Activated CD4-positive, alpha-beta memory T cell treated with anti-CD3 and anti-CD28 coated beads for 36 hours (primary cell): ENCODE measurements at regions of chr7 and their contacts with region 1.

Region 1: GRCh38 chr7:30983042-30983913 is 19.5 kb downstream of the GHRHR start:
- DNase-seq: peak; percentile 84
- H3K4me3 Mint-ChIP-seq: no peak overlapping the region
- H3K27ac Mint-ChIP-seq: no peak overlapping the region
- H3K4me1 Mint-ChIP-seq: peaks cover 12% of the 10 kb centered on the region
- H3K27me3 Mint-ChIP-seq: peaks cover 15% of the 10 kb centered on the region

Region 2: DNA sequence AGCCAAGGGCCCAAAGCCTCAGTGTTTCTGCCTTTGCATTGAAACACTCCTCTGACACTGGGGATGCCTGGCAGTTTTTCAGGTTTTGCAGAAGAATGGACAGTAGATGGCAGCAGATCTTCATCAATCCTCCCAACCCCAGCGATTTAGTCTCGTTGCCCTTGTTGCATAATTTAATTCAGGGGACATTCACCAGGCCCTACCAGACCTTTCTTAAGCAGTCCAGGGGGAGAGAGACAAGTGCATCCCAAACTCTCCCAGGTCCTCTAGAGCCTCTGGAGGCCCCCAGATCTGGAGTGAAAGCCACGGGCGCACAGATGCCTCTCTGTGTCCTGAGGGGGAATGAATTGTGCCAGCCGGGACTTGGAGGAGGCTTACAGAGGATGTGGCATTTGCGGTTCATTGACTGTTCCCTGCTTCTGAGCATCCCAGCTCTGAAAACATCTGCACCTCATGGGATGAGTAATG is 182.5 kb before region 1 on chr7:
- CTCF ChIA-PET with region 1: interaction called, 10 read pairs
- POLR2A ChIA-PET with region 1: no interaction called
- intact Hi-C with region 1: no loop called
- DNase-seq: peak; percentile 25
- H3K4me3 Mint-ChIP-seq: no peak overlapping the region
- H3K27ac Mint-ChIP-seq: no peak overlapping the region
- H3K4me1 Mint-ChIP-seq: peaks cover 8% of the 10 kb centered on the region
- H3K27me3 Mint-ChIP-seq: no peaks in the 10 kb centered on the region

Region 3: DNA sequence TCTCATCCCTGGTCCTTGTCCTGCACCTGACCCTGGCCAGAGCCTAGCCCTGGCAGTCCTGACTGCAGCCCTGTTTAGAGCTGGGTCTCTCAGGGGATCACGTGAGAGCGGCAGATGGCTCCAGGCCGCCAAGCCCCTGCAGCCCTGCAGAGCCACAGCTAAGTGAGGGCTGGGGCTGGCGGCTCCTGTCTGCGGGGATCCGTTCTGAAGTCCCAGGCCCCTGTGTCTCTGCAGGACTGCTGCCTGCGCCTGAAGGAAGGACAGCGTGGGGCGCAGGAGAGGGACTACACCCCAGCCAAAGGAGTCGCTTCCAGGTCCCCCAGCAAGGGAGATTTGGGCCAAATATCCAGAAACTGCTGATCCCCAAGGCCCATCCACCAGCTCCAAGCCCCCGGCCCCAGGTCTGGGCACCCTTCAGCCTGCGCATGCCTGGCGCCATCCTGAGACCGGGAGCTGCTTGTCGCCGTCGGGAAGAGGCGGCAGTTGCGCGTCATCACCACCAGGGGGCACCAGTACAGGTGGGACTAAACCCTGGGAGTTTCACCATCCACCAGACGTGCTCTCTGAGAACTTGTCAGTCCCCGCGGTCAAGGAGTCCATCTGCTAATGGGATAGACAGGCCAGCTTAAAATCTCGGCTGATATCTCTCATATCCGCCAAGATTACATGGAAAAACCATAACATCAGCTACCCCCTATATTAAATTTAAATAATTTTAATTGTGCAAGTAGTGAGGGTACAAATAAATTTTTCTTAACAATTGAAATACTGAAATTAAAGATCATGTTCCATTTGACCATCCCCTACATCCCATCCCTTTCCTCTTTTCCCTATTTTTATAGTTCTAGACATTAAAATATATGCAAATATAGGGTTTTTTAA is 44.6 kb before region 1 on chr7:
- CTCF ChIA-PET with region 1: interaction called, 13 read pairs
- POLR2A ChIA-PET with region 1: no interaction called
- intact Hi-C with region 1: no loop called
- DNase-seq: peak; percentile 77
- H3K4me3 Mint-ChIP-seq: no peak overlapping the region
- H3K27ac Mint-ChIP-seq: no peak overlapping the region
- H3K4me1 Mint-ChIP-seq: no peaks in the 10 kb centered on the region
- H3K27me3 Mint-ChIP-seq: peaks cover 15% of the 10 kb centered on the region

Region 4: DNA sequence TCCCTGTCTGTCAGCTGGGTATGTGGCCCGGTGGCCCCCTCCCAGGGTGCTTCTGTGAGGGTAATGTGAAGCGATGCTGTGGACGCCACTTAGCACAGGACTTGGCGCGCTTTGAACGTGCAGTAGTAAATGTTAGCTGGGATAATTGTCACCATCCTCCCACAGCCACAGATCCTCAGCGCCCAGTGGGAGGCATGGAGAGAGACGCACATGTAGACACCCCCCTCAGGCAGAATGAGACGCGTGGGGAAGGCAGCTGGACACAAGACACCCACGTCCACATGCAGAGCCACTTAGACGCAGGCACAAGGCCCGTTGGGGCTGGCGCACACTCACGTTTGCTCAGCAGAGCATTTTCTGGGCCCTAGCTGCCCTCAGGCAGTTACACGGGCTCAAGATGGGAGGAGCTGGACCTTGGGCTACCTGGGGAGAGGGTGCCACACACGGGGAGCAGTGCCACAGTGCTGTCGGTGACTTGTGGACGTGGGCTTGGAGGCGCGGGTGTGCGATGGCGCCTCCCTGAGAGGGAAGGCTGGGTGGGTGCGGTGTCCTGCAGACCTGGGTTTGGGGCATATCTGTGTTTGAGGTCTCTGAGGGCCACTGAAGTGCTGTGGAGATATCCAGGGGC is 95.2 kb after region 1 on chr7:
- CTCF ChIA-PET with region 1: no interaction called
- POLR2A ChIA-PET with region 1: no interaction called
- intact Hi-C with region 1: no loop called
- DNase-seq: no peak
- H3K4me3 Mint-ChIP-seq: no peak overlapping the region
- H3K27ac Mint-ChIP-seq: no peak overlapping the region
- H3K4me1 Mint-ChIP-seq: peaks cover 2% of the 10 kb centered on the region
- H3K27me3 Mint-ChIP-seq: peaks cover 2% of the 10 kb centered on the region

Region 5: GRCh38 chr7:31122649-31123058 is 139.4 kb after region 1 on chr7:
- CTCF ChIA-PET with region 1: interaction called, 297 read pairs
- POLR2A ChIA-PET with region 1: interaction called, 3 read pairs
- intact Hi-C with region 1: loop called (anchors 1 kb)
- DNase-seq: peak; percentile 57
- H3K4me3 Mint-ChIP-seq: no peak overlapping the region
- H3K27ac Mint-ChIP-seq: no peak overlapping the region
- H3K4me1 Mint-ChIP-seq: no peaks in the 10 kb centered on the region
- H3K27me3 Mint-ChIP-seq: peaks cover 9% of the 10 kb centered on the region

Region 6: DNA sequence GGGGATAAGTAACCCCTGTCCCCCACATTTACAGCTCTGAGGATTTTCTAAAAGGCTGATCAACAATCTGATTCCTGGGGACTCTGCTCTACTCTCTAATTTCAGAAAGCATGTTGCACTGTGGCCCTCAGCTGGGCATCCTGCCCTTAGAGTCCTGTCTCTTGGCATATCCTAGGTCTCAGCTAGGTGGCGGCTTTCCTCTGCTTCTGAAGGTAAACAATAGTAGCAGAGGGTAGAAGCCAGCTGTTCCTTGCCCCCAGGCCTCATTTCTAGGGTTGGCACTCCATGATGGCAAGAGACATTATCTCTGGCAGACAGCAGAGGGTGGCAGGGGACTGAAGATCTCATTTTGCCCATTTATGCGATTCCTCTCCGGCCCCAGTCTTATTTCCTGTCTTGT is 145.8 kb after region 1 on chr7:
- CTCF ChIA-PET with region 1: interaction called, 297 read pairs
- POLR2A ChIA-PET with region 1: no interaction called
- intact Hi-C with region 1: no loop called
- DNase-seq: no peak
- H3K4me3 Mint-ChIP-seq: no peak overlapping the region
- H3K27ac Mint-ChIP-seq: no peak overlapping the region
- H3K4me1 Mint-ChIP-seq: no peaks in the 10 kb centered on the region
- H3K27me3 Mint-ChIP-seq: peaks cover 1% of the 10 kb centered on the region

Region 7: DNA sequence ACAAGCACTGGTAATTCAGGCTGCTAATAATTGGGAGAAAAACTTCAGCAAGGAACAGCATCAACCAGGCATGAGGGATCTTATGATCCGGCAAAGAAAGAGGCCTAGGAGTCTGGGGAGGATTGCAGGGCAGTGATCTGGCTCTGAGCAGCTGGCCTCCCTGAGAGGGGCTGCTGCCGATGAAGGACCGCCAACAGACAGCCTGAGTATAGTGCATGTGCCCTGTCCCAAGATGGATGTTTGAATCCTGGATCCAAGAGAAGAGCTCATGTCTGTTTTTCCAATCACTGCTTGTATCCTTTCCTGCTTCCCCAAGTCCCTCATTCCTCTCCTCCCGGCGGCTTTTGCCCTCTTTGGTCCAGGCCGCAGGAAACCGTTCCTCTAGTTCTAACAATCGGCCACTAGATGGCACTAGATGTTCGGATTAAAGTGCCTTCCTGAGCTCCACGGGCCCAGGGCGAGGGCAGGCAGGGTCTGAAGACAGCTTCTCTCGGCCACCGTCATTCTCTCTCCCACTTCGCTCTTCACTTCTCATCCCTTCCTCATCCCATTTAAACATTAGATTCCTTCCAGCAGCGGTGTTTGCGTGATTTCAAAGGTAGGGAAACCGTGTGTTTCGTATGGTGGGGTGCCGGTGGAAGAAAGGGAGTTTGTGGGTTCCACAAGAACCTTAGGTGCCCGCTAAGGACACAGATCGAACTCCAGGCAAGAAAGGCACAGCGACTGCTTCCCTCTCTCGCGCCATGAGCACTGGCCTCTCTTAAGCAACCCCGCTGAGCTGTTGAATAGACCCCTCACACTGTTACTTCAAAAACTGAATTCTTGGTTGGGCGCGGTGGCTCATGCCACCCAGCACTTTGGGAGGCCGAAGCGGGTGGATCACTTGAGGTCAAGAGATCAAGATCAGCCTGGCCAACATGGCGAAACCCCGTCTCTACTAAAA is 151.2 kb after region 1 on chr7:
- CTCF ChIA-PET with region 1: interaction called, 25 read pairs
- POLR2A ChIA-PET with region 1: no interaction called
- intact Hi-C with region 1: no loop called
- DNase-seq: peak; percentile 57
- H3K4me3 Mint-ChIP-seq: no peak overlapping the region
- H3K27ac Mint-ChIP-seq: no peak overlapping the region
- H3K4me1 Mint-ChIP-seq: peaks cover 4% of the 10 kb centered on the region
- H3K27me3 Mint-ChIP-seq: peaks cover 1% of the 10 kb centered on the region